Right cardiac atrium (tissue), 5 donors: ENCODE measurements at regions of chr16 and their contacts with region 1.

Region 1: GRCh38 chr16:180938-181667 is 844 bp downstream of the HBQ1 start:
- DNase-seq: peak; percentile 67 to 89 (median 88)
- ATAC-seq: peak; percentile 71 to 79
- H3K4me3 ChIP-seq: peak overlapping the region; percentile 6
- H3K27ac ChIP-seq: no peak overlapping the region
- H3K4me1 ChIP-seq: peaks cover 6% of the 10 kb centered on the region
- H3K27me3 ChIP-seq: no peaks in the 10 kb centered on the region

Region 2: GRCh38 chr16:117379-118365 is 63.4 kb before region 1 on chr16:
- intact Hi-C with region 1: loop called in 1 of 4 experiments (anchors 5 kb)
- DNase-seq: peak; percentile 58 to 79 (median 79)
- ATAC-seq: peak; percentile 47 to 48
- H3K4me3 ChIP-seq: no peak overlapping the region
- H3K27ac ChIP-seq: no peak overlapping the region
- H3K4me1 ChIP-seq: peaks cover 3% of the 10 kb centered on the region
- H3K27me3 ChIP-seq: no peaks in the 10 kb centered on the region